ENCODE measurements at regions of chr2 and their contacts with region 1.

Region 1: GRCh38 chr2:121400201-121400600 is 115.2 kb upstream of the TFCP2L1 start:
- DNase-seq: no peak
- H3K4me3 ChIP-seq: no peak overlapping the region
- H3K27ac ChIP-seq: no peak overlapping the region
- H3K4me1 ChIP-seq: no peaks in the 10 kb centered on the region
- H3K27me3 ChIP-seq: no peaks in the 10 kb centered on the region
- CTCF ChIP-seq: no peak

Region 2: GRCh38 chr2:121297217-121297830 is 102.9 kb before region 1 on chr2:
- CTCF ChIA-PET with region 1: no interaction called
- dilution Hi-C with region 1: loop called (anchors 5 kb)
- in situ Hi-C with region 1: no loop called
- intact Hi-C with region 1: no loop called
- DNase-seq: no peak
- H3K4me3 ChIP-seq: no peak overlapping the region
- H3K27ac ChIP-seq: no peak overlapping the region
- H3K4me1 ChIP-seq: no peaks in the 10 kb centered on the region
- H3K27me3 ChIP-seq: no peaks in the 10 kb centered on the region
- CTCF ChIP-seq: peak; percentile 82 to 88

Region 3: GRCh38 chr2:121446647-121447241 is 46.5 kb after region 1 on chr2:
- CTCF ChIA-PET with region 1: no interaction called
- dilution Hi-C with region 1: no loop called
- in situ Hi-C with region 1: no loop called
- intact Hi-C with region 1: loop called (anchors 5 kb)
- DNase-seq: peak; percentile 17
- H3K4me3 ChIP-seq: no peak overlapping the region
- H3K27ac ChIP-seq: no peak overlapping the region
- H3K4me1 ChIP-seq: no peaks in the 10 kb centered on the region
- H3K27me3 ChIP-seq: no peaks in the 10 kb centered on the region
- CTCF ChIP-seq: no peak

Region 4: DNA sequence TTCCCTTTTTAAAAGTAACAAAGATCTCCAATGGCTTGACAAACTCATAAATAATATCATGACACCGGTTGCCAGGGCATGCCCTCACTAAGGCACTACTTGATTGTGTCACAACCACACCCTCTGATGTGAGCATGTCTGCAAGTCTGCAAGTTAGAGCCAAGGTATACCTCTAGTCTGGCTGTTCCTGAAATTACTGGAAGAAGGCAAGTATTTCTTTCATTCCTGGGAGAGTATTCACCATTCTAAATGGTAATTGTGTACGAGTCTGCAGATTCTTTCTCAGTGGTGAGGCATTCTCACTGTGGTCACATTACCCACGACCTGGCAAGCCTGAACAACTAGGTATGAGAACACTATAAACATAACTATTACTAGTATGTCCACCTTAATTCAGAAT is 104.8 kb after region 1 on chr2:
- CTCF ChIA-PET with region 1: no interaction called
- dilution Hi-C with region 1: no loop called
- in situ Hi-C with region 1: no loop called
- intact Hi-C with region 1: loop called (anchors 5 kb)
- DNase-seq: peak; percentile 99
- H3K4me3 ChIP-seq: peak overlapping the region in 2 of 3 experiments; percentile 25 to 31
- H3K27ac ChIP-seq: peak overlapping the region; percentile 99
- H3K4me1 ChIP-seq: peaks cover 55% of the 10 kb centered on the region
- H3K27me3 ChIP-seq: no peaks in the 10 kb centered on the region
- CTCF ChIP-seq: no peak

Region 5: DNA sequence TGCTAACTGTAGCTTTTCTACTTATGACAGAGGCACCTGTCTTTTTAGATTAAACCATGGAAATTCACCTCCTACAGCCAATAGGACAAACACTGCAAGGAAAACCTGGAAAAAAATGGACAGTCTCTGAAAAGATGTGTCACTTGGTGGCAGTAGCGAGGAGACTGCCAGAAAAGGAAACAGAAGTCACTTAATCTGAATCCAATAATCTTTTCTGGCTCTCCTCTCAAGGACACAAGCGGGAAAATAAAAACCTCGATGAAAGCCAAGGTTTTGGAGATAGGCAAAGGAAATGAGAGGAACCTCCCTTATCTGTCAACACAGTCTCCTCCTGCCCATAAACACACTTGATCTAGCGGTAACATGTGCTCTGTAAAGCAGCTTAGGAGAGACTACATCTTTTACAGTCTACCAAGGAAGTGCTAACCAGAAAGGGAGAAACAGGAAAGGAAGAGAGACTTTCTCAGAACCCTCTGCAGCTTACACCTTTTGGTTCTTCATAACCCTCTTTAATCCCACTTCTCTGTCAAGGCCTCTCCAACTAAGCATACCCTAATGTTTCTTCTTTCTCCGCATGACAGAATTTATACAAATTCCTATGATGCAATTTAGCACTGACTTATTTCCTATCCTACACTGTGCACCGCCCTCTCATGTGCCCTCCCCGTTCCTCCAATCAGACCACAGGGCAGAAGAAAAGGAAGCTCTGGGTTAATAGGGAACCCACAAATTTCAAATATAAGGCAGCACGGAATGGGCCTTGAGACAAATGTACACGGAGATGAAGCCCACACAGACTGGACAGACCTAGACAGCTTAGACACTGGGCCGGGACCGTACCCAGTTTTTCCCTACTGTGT is 196.2 kb after region 1 on chr2:
- CTCF ChIA-PET with region 1: no interaction called
- dilution Hi-C with region 1: no loop called
- in situ Hi-C with region 1: no loop called
- intact Hi-C with region 1: loop called (anchors 5 kb)
- DNase-seq: peak; percentile 36
- H3K4me3 ChIP-seq: no peak overlapping the region
- H3K27ac ChIP-seq: no peak overlapping the region
- H3K4me1 ChIP-seq: peaks cover 18% of the 10 kb centered on the region
- H3K27me3 ChIP-seq: no peaks in the 10 kb centered on the region
- CTCF ChIP-seq: peak; percentile 17 to 66

Region 6: GRCh38 chr2:121722479-121722878 is 322.3 kb after region 1 on chr2:
- CTCF ChIA-PET with region 1: no interaction called
- dilution Hi-C with region 1: no loop called
- in situ Hi-C with region 1: no loop called
- intact Hi-C with region 1: loop called (anchors 1 kb)
- DNase-seq: peak; percentile 82
- H3K4me3 ChIP-seq: no peak overlapping the region
- H3K27ac ChIP-seq: peak overlapping the region; percentile 80
- H3K4me1 ChIP-seq: peaks cover 12% of the 10 kb centered on the region
- H3K27me3 ChIP-seq: no peaks in the 10 kb centered on the region
- CTCF ChIP-seq: no peak